ENCODE measurements at regions of chr12 and their contacts with region 1.

Region 1: DNA sequence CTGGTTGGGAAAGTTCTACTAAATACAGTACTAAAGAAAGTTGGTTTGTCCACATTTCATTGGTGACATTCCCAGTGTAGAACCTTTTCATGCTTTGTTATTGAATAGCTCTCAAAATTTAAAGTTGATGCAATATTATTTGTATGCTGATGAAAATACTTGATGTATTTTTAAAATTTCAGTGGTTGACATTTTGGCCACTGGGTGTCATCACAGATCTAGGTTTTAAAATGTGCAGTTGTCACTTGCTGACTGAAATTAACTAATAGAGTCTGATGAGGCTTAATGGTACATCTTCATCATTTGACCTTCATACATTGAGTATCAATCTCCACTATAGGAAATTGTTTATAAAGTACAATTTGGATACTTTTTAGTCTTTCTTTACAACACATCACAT is 37.1 kb downstream of the CMAS start:
- DNase-seq: no peak
- ATAC-seq: peak; percentile 31 to 64 (median 51)
- H3K4me3 ChIP-seq: no peak overlapping the region
- H3K27ac ChIP-seq: no peak overlapping the region
- H3K4me1 ChIP-seq: no peaks in the 10 kb centered on the region
- H3K27me3 ChIP-seq: no peaks in the 10 kb centered on the region
- CTCF ChIP-seq: peak; percentile 40 to 54 (median 50)
- POLR2A ChIP-seq: no peak

Region 2: GRCh38 chr12:21962236-21962635 is 120.9 kb before region 1 on chr12:
- intact Hi-C with region 1: no loop called
- DNase-seq: peak in 1 of 3 donors; percentile 42
- ATAC-seq: no peak
- H3K4me3 ChIP-seq: no peak overlapping the region
- H3K27ac ChIP-seq: no peak overlapping the region
- H3K4me1 ChIP-seq: no peaks in the 10 kb centered on the region
- H3K27me3 ChIP-seq: no peaks in the 10 kb centered on the region
- CTCF ChIP-seq: no peak
- POLR2A ChIP-seq: no peak

Region 3: DNA sequence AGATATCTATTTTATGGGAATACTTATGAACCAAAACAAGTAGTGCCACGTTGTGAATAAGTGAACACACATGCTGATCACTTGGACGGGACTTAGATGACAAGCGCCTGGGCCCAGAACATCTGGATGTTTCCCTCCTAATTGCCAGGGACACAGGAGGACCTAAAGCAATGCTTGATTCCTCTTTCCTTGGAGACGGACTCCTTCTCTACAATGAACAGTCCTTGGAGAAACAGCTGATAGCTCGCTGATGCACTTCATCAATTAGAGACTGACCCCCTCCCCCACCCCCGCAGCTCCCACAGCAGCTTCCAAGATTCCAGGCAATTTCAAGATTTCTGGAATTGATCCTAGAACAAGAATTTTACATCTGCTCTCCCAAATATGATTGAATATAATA is 165.0 kb after region 1 on chr12:
- intact Hi-C with region 1: no loop called
- DNase-seq: no peak
- ATAC-seq: no peak
- H3K4me3 ChIP-seq: no peak overlapping the region
- H3K27ac ChIP-seq: no peak overlapping the region
- H3K4me1 ChIP-seq: peaks cover 0 to 8% (median 0%) of the 10 kb centered on the region in 4 donors
- H3K27me3 ChIP-seq: no peaks in the 10 kb centered on the region
- CTCF ChIP-seq: no peak
- POLR2A ChIP-seq: no peak

Region 4: DNA sequence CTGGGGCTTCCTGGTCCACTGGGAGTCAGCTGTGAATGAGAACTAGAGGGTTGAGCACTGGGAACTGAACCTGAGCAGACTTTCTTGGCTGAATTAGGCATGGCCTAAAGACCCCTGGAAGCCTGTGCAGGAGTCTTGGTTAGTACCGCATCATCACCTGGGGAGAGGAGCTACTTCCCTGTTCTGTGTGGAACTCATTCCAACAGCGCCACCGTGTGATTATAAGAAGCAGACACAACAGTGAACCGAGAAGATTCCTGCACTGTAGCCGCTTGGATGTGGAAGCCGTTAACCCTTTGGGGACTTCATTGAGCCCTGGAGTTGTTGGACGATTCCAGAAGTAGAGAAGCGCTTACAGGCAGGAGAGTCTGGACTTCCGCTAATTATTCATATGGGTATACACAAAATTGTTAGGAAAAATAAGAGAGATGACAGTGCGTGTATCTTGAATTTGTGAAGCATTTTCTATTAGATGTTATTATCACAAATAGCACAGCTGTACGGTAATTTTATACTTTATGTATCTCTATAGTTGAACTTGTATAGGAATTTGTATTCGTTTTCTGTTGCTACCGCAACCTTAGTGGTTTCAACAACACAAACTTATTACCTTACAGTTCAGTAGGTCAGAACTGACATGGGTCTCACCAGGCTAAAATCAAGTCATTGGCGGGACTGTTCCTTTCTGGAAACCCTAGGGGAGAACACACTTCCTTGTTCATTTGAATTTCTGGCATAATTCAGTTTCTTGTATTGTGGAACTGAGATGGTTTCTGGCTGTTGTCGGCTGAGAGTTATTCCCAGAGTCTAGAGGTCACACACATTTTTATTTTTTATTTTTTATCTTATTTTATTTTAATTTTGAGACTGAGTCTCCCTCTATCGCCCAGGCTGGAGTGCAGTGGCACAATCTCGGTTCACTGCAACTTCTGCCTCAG is 360.5 kb after region 1 on chr12:
- intact Hi-C with region 1: loop called in 1 of 2 experiments (anchors 10 kb)
- DNase-seq: peak in 2 of 3 donors; percentile 32 to 62
- ATAC-seq: peak; percentile 96 to 99 (median 98)
- H3K4me3 ChIP-seq: no peak overlapping the region
- H3K27ac ChIP-seq: no peak overlapping the region
- H3K4me1 ChIP-seq: no peaks in the 10 kb centered on the region
- H3K27me3 ChIP-seq: no peaks in the 10 kb centered on the region
- CTCF ChIP-seq: peak; percentile 71 to 78 (median 78)
- POLR2A ChIP-seq: no peak